Common myeloid progenitor, CD34-positive (primary cell): ENCODE measurements at regions of chr5 and their contacts with region 1.

Region 1: DNA sequence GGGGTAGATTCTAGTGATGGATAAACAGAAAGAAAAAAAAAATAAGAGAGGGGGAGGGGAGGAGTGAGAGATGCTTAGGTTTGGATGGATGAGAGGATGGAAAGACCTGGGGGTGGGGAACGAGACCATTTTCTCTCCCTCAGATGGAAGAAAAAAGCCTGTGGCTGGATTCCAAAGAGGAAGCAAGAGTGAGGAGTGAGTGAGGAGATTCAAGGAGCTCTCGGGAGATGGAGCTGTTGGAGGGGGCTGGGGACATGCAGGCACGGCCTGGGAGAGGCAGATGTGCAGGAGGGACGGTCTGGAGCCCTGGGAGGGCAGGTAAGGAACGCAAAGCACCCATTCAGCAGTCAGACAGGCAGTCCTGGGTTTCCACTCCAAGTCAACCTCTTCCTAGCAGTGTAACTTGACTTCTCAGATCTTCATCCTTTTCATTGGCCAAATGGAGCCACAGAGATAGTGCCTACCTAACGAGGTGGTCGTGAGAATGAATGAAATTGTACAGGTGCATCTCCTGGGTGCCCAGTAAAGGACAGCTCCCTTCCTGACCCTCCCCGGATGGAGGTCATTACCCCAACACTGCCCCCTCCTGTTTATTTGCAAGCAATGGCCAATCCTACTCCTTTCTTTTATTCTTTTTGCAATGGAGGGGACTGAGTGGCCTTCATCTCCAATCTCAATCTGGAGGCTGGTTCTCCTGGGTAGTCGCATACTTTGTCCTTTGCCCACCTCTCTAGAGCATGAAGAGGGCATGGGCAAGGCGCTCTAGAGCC is 52.2 kb downstream of the PCDH1 start:
- DNase-seq: no peak
- H3K4me3 ChIP-seq: no peak overlapping the region
- H3K27ac ChIP-seq: no peak overlapping the region
- H3K4me1 ChIP-seq: peaks cover 0 to 8% (median 3%) of the 10 kb centered on the region in 4 experiments
- H3K27me3 ChIP-seq: peaks cover 0 to 3% (median 0%) of the 10 kb centered on the region in 5 experiments

Region 2: GRCh38 chr5:141420855-141421496 is 405.0 kb before region 1 on chr5 and contains the start of gene PCDHGA11:
- CTCF ChIA-PET with region 1: no interaction called
- POLR2A ChIA-PET with region 1: no interaction called
- DNase-seq: peak; percentile 75 to 81 (median 80)
- H3K4me3 ChIP-seq: peak within 1 kb of the TSS; percentile 36 to 81 (median 63)
- H3K27ac ChIP-seq: no peak within 1 kb of the TSS
- H3K4me1 ChIP-seq: peaks cover 0 to 18% (median 9%) of the 10 kb centered on the region in 4 experiments
- H3K27me3 ChIP-seq: peaks cover 30 to 89% (median 37%) of the 10 kb centered on the region in 5 experiments

Region 3: DNA sequence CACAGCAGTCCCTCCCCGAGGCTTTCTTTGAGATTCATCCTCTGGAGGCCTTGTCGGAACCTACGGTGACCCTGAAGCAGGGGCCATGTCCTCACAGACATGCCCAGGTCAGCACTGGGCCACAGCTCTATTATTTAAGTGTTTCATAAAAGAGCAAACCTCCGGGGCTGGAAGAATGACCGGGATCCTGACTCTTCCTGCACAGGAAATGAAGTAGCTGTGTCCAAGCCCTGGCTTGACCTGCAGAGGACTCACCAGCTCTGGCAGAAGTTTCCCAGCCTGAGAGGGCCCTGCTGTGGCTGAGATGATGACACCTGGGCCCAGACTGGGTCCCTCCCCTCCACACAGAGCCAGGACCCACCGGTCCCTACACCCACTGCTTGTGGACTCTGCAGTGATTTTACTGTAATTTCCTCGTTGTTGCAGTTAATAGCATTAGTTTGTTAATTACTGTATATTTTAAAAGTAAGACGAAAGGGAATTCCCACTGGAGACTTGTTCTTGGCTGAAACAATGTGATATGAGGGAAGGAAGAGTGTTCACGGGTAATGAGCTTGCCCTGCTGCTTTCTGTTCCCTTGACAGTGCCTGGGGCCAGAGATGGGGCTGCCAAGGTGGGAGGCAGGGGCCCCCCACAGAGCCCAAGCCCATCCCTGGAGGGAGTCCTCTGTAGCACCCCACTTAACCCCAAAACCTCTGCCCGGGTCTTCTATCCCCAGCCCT is 19.9 kb before region 1 on chr5:
- CTCF ChIA-PET with region 1: interaction called, 51 read pairs
- POLR2A ChIA-PET with region 1: no interaction called
- DNase-seq: no peak
- H3K4me3 ChIP-seq: no peak overlapping the region
- H3K27ac ChIP-seq: no peak overlapping the region
- H3K4me1 ChIP-seq: no peaks in the 10 kb centered on the region
- H3K27me3 ChIP-seq: peaks cover 13 to 90% (median 29%) of the 10 kb centered on the region in 5 experiments

Region 4: DNA sequence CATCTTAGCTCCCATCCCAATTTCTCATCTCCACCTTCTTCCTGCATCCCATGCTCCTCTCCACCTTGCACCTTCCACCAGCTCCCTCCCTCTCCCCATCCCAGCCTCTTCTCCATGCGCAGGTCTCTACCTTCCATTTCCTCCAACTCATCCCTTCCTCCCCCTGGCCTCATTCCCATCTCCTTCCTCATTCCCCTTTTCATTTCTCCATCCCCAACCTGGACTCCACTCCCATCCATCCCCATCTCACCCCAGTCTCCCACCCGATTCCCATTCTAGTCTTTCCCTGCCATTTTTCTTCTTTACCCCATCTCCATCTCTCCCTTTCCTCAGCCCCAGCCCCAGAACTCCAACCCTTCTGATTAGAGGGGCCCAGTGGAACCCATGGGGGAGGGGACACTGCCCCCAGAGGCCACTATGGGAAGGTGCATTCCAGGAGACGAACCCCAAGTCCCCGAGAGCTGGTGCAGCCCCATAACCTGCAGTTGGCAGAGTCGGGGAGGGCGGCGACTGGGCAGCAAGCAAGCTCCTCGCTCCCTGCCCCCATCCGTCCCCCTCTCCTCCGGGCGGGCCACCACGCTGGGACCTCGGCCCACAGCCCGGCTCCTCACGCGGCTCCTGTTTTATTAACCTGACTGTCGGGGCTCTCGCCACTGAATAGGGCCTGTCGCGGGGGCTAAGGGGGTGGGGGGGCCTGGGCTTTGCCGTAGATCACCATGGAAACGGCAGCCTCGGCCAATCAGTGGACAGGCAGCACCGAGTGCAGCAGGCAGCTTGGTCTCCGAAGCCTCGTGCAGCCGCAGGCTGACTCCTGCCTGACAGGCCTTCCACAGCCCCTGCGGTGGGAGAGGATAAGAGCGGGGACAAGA is 14.5 kb before region 1 on chr5:
- CTCF ChIA-PET with region 1: interaction called, 51 read pairs
- POLR2A ChIA-PET with region 1: no interaction called
- DNase-seq: peak; percentile 37 to 69 (median 64)
- H3K4me3 ChIP-seq: peak overlapping the region in 1 of 7 experiments; percentile 16
- H3K27ac ChIP-seq: no peak overlapping the region
- H3K4me1 ChIP-seq: no peaks in the 10 kb centered on the region
- H3K27me3 ChIP-seq: peaks cover 11 to 62% (median 17%) of the 10 kb centered on the region in 5 experiments